A549 (cell line): ENCODE measurements at regions of chr11 and their contacts with region 1.

Region 1: DNA sequence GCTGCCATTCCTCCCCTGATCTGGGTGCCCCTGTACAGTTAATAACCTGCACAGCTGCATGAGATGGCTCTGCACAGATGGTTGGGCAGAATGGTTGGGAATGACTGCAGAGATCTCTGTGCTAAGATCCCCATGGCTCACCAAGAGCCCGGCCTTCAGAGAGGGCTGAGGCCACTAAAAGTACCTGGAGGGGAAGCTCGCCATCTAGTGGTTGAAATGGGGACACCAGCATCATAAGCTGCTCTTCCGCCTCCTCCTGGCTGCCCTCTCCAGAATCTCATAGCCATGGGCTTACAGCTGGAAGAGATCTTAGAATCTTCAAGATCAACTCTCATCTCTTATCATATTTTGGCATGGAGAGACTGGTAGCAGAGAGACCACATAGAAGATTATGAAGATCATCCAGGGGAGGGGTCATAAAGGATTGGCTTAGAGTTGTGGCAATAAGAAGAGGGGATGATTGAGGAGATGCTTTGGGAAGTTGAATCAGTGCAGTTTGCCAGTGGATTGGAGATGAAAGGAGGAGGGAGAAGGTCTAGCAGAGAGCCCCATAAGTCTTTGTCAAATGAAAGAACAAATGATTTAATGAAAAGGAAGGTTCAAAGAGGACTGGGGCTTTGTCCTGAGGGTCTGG is 22.0 kb upstream of the TLCD5 start:
- DNase-seq: peak; percentile 56 to 76
- ATAC-seq: peak; percentile 79 to 89
- H3K4me3 ChIP-seq: no peak overlapping the region
- H3K27ac ChIP-seq: no peak overlapping the region
- H3K4me1 ChIP-seq: peaks cover 22% of the 10 kb centered on the region
- CTCF ChIP-seq: peak; percentile 70
- EP300 ChIP-seq: no peak
- POLR2A ChIP-seq: no peak
- RAD21 ChIP-seq: peak; percentile 55 to 64; a peak in 4 of 5 replicates

Region 2: GRCh38 chr11:120180551-120181232 is 122.4 kb before region 1 on chr11:
- CTCF ChIA-PET with region 1: interaction called, 109 read pairs
- POLR2A ChIA-PET with region 1: no interaction called
- DNase-seq: no peak
- ATAC-seq: peak in 1 of 2 experiments; percentile 40; a peak in 2 of 6 replicates
- H3K4me3 ChIP-seq: no peak overlapping the region
- H3K27ac ChIP-seq: no peak overlapping the region
- H3K4me1 ChIP-seq: no peaks in the 10 kb centered on the region
- CTCF ChIP-seq: no peak
- EP300 ChIP-seq: no peak
- POLR2A ChIP-seq: no peak
- RAD21 ChIP-seq: no peak

Region 3: GRCh38 chr11:120248551-120249278 is 54.4 kb before region 1 on chr11:
- CTCF ChIA-PET with region 1: interaction called, 104 read pairs
- POLR2A ChIA-PET with region 1: no interaction called
- DNase-seq: no peak
- ATAC-seq: no peak
- H3K4me3 ChIP-seq: no peak overlapping the region
- H3K27ac ChIP-seq: no peak overlapping the region
- H3K4me1 ChIP-seq: no peaks in the 10 kb centered on the region
- CTCF ChIP-seq: no peak
- EP300 ChIP-seq: no peak
- POLR2A ChIP-seq: no peak
- RAD21 ChIP-seq: no peak

Region 4: DNA sequence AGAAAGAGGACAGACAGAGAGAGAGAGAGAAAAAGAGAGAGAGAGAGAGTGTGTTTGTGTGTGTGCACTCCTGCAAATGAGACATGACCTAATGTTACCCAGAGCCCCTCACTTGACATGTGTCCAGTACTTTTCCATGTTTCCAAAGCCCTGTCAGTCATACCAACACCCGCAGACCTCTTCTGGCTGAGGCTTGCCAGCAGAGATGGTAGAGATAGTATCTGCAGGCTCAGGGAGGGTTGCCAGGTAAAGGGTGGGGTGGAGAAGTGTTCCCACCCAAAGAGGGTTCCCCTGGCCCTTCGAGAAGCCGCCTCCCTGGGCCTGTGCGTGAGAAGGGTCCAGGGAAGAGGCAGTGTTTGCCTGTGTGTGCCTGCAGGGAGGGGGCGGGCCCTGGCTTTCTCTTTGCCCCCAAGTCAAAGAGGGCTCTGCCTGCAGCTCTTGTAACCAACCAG is 22.5 kb before region 1 on chr11:
- CTCF ChIA-PET with region 1: interaction called, 13 read pairs
- POLR2A ChIA-PET with region 1: no interaction called
- DNase-seq: no peak
- ATAC-seq: peak in 1 of 2 experiments; percentile 34; a peak in 1 of 6 replicates
- H3K4me3 ChIP-seq: no peak overlapping the region
- H3K27ac ChIP-seq: no peak overlapping the region
- H3K4me1 ChIP-seq: no peaks in the 10 kb centered on the region
- CTCF ChIP-seq: no peak
- EP300 ChIP-seq: no peak
- POLR2A ChIP-seq: no peak
- RAD21 ChIP-seq: no peak

Region 5: GRCh38 chr11:120635136-120635810 is 332.2 kb after region 1 on chr11:
- CTCF ChIA-PET with region 1: no interaction called
- POLR2A ChIA-PET with region 1: no interaction called
- DNase-seq: no peak
- ATAC-seq: no peak
- H3K4me3 ChIP-seq: no peak overlapping the region
- H3K27ac ChIP-seq: no peak overlapping the region
- H3K4me1 ChIP-seq: no peaks in the 10 kb centered on the region
- CTCF ChIP-seq: no peak
- EP300 ChIP-seq: no peak
- POLR2A ChIP-seq: no peak
- RAD21 ChIP-seq: no peak